CD8-positive, alpha-beta memory T cell (primary cell): ENCODE measurements at regions of chr6 and their contacts with region 1.

Region 1: DNA sequence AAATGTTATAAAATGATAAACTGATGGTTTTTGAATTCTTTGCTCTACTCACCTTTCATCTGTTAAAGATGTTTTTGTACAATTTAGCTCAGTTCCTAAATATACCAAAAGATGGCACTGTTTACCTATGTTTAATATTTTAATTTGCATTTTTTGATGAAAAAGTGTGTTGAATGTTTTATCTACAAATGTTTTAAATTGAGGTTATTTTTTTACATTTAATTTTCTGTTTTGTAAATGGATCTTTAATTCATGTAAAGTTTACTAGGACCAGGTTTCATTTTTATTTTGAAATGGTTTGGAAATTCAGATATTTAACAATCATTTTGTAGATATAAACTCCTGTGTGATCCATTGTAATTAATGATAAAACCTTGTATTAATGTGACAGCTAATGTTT is 30.0 kb downstream of the CDKAL1 start:
- DNase-seq: peak in 2 of 5 donors; percentile 8 to 14
- H3K4me3 ChIP-seq: no peak overlapping the region
- H3K4me3 Mint-ChIP-seq: no peak overlapping the region
- H3K27ac ChIP-seq: no peak overlapping the region
- H3K27ac Mint-ChIP-seq: no peak overlapping the region
- H3K4me1 ChIP-seq: peaks cover 5% of the 10 kb centered on the region
- H3K4me1 Mint-ChIP-seq: peaks cover 9 to 15% (median 14%) of the 10 kb centered on the region in 3 donors
- H3K27me3 ChIP-seq: no peaks in the 10 kb centered on the region
- H3K27me3 Mint-ChIP-seq: no peaks in the 10 kb centered on the region

Region 2: GRCh38 chr6:20826378-20826777 is 262.1 kb after region 1 on chr6:
- CTCF ChIA-PET with region 1: no interaction called
- POLR2A ChIA-PET with region 1: no interaction called
- DNase-seq: no peak
- H3K4me3 ChIP-seq: no peak overlapping the region
- H3K4me3 Mint-ChIP-seq: no peak overlapping the region
- H3K27ac ChIP-seq: no peak overlapping the region
- H3K27ac Mint-ChIP-seq: no peak overlapping the region
- H3K4me1 ChIP-seq: no peaks in the 10 kb centered on the region
- H3K4me1 Mint-ChIP-seq: peaks cover 0 to 5% (median 0%) of the 10 kb centered on the region in 3 donors
- H3K27me3 ChIP-seq: no peaks in the 10 kb centered on the region
- H3K27me3 Mint-ChIP-seq: no peaks in the 10 kb centered on the region

Region 3: GRCh38 chr6:21593412-21593926 is 1029.2 kb after region 1 on chr6 and contains the start of gene SOX4:
- CTCF ChIA-PET with region 1: interaction called, 47 read pairs
- POLR2A ChIA-PET with region 1: no interaction called
- DNase-seq: peak; percentile 12 to 81 (median 64)
- H3K4me3 ChIP-seq: peak within 1 kb of the TSS; percentile 44
- H3K4me3 Mint-ChIP-seq: peak within 1 kb of the TSS in 4 of 7 donors; percentile 86 to 89 (median 88)
- H3K27ac ChIP-seq: no peak within 1 kb of the TSS
- H3K27ac Mint-ChIP-seq: peak within 1 kb of the TSS in 4 of 8 donors; percentile 52 to 84 (median 67)
- H3K4me1 ChIP-seq: peaks cover 31% of the 10 kb centered on the region
- H3K4me1 Mint-ChIP-seq: peaks cover 21 to 31% (median 24%) of the 10 kb centered on the region in 3 donors
- H3K27me3 ChIP-seq: peaks cover 47% of the 10 kb centered on the region
- H3K27me3 Mint-ChIP-seq: peaks cover 22 to 45% of the 10 kb centered on the region in 2 donors
- total RNA-seq, gene SOX4: 0.60 to 0.66 TPM